Activated CD4-positive, alpha-beta memory T cell treated with anti-CD3 and anti-CD28 coated beads for 36 hours (primary cell): ENCODE measurements at regions of chr15 and their contacts with region 1.

Region 1: DNA sequence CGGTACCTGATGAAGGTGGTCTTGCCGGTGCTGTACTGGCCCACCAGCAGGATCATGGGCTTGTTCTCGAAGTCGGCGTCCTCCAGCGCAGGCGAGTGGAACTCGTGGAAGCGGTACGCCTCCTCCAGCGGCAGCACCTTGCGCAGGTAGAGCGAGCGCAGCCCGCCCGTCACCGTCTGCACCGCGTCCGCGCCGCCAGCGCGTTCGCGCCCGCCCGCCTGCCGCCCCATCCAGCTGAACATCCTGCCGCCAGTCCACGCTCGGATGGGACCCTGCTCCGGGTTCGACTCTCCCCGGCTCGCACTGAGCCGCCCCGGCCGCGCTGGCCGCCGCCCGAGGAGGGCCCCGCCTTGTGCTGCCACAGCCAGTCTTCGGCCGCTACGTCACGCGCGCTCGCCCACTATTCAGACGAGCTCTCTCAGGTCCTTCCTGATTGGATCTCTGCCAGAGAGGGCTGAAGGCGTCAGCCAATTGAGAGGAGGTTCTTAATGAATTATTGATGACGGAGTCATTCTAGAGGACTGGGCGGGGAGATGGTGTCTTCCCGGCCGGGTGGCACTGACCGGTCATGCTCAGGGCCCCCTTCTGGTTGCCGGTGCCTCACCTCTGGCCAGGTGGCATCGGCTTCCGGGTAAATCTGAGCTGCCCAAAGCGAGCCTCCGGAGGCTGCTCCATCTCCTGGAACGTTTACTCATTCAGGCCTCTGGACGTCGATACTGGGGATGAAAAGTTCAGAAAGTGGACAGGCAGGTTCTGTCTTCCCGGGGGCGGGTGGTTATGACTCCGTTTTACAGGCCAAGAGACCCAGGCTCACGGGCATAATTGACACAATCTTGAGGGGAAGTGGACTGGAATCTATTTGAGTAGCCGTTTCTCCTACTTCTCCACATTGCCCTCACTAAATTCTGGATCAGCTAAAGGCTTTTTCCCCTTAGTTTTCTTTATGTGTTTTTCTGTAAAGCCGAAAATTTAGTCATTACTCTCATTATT is at the start of gene EHD4:
- DNase-seq: peak; percentile 98
- H3K4me3 Mint-ChIP-seq: peak within 1 kb of the TSS; percentile 90
- H3K27ac Mint-ChIP-seq: peak within 1 kb of the TSS; percentile 97
- H3K4me1 Mint-ChIP-seq: peaks cover 53% of the 10 kb centered on the region
- H3K27me3 Mint-ChIP-seq: peaks cover 7% of the 10 kb centered on the region
- total RNA-seq, gene EHD4: 43.6 to 45.0 TPM

Region 2: GRCh38 chr15:41493205-41493901 is 479.2 kb before region 1 on chr15 and contains the start of gene ITPKA:
- CTCF ChIA-PET with region 1: no interaction called
- POLR2A ChIA-PET with region 1: no interaction called
- intact Hi-C with region 1: loop called (anchors 2 kb)
- DNase-seq: peak; percentile 95
- H3K4me3 Mint-ChIP-seq: peak within 1 kb of the TSS; percentile 67
- H3K27ac Mint-ChIP-seq: peak within 1 kb of the TSS; percentile 61
- H3K4me1 Mint-ChIP-seq: peaks cover 36% of the 10 kb centered on the region
- H3K27me3 Mint-ChIP-seq: peaks cover 31% of the 10 kb centered on the region
- total RNA-seq, gene ITPKA: 3.5 to 4.7 TPM

Region 3: DNA sequence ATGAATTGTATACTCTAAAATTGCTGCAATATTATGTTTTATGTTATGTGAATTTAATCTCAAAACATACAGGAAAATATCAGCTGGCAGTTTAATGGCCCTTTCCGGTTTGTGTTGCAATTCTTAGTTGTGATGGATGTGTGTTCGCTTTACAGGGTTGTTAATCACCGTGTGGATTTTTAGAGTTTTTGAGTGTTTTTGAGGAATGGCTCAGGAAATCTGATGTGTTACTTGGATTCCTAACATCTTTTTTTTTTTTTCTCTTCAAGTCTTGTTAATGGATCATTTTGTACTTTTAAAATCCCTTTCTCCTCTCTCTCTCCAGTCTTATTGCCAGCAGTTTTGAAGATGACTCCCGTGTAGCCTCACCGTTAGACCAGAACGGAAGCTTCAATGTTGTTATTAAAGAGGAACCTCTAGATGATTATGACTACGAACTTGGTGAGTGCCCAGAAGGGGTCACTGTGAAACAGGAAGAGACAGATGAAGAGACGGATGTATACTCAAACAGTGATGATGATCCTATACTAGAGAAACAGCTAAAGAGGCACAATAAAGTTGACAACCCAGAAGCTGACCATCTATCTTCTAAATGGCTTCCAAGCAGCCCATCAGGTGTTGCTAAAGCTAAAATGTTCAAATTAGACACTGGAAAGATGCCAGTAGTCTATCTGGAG is 276.7 kb before region 1 on chr15:
- CTCF ChIA-PET with region 1: no interaction called
- POLR2A ChIA-PET with region 1: no interaction called
- intact Hi-C with region 1: loop called (anchors 2 kb)
- DNase-seq: peak; percentile 66
- H3K4me3 Mint-ChIP-seq: peak overlapping the region; percentile 10
- H3K27ac Mint-ChIP-seq: peak overlapping the region; percentile 70
- H3K4me1 Mint-ChIP-seq: peaks cover 47% of the 10 kb centered on the region
- H3K27me3 Mint-ChIP-seq: no peaks in the 10 kb centered on the region

Region 4: DNA sequence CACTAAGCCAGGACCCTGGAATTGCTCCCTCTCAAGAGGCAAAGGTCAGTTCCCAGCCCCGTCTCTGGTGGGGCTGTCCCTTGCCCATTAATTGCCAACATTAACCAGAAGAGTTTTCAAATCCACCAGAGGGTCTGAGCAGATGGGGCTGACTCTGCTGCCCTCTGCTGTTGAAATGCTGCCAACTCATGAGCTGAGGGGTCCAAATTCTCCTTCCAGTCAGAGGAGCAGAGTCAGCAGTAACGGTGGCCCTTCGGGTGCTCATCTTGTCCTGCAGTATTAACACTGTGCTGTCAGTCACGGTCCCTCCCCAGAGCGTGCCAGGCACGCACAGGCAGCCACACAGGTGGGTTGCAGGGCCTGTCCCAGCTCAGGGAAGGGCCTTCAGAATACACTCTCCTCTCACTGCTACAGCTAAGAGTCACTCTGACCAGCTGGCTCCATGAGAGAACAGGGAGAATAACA is 68.0 kb before region 1 on chr15:
- CTCF ChIA-PET with region 1: interaction called, 10 read pairs
- POLR2A ChIA-PET with region 1: interaction called, 5 read pairs
- intact Hi-C with region 1: no loop called
- DNase-seq: peak; percentile 81
- H3K4me3 Mint-ChIP-seq: no peak overlapping the region
- H3K27ac Mint-ChIP-seq: peak overlapping the region; percentile 54
- H3K4me1 Mint-ChIP-seq: peaks cover 9% of the 10 kb centered on the region
- H3K27me3 Mint-ChIP-seq: no peaks in the 10 kb centered on the region

Region 5: DNA sequence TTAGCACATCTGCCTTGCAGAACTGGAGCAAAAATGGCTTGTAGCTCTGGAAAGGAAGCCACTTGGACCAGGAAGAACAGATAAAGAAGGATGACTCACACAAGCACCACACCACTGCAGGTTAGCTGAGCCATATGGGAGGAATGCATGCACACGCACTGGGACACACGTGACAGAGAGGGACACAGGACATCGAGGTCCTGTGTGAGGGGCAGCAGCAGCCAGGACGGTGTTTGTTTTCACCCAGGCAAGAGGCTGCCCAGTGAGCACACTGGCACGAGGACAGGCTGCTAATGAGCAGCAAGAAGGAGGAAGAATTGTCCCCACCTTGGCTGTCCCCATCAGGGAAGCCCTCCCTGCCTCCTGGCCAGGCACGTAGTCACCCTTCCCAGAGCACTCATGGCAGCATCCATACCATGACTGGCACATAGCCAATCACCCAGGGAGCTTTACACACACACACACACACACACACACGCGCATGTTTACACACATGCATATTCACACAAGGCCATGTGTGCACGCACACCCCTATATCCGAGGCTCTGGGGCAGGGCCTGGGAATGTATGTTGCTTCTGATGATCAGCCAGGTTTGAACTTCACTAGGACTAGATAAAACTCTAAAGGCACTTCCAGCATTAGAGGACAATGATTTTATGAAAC is 54.6 kb before region 1 on chr15:
- CTCF ChIA-PET with region 1: no interaction called
- POLR2A ChIA-PET with region 1: no interaction called
- intact Hi-C with region 1: no loop called
- DNase-seq: no peak
- H3K4me3 Mint-ChIP-seq: no peak overlapping the region
- H3K27ac Mint-ChIP-seq: no peak overlapping the region
- H3K4me1 Mint-ChIP-seq: peaks cover 5% of the 10 kb centered on the region
- H3K27me3 Mint-ChIP-seq: no peaks in the 10 kb centered on the region

Region 6: DNA sequence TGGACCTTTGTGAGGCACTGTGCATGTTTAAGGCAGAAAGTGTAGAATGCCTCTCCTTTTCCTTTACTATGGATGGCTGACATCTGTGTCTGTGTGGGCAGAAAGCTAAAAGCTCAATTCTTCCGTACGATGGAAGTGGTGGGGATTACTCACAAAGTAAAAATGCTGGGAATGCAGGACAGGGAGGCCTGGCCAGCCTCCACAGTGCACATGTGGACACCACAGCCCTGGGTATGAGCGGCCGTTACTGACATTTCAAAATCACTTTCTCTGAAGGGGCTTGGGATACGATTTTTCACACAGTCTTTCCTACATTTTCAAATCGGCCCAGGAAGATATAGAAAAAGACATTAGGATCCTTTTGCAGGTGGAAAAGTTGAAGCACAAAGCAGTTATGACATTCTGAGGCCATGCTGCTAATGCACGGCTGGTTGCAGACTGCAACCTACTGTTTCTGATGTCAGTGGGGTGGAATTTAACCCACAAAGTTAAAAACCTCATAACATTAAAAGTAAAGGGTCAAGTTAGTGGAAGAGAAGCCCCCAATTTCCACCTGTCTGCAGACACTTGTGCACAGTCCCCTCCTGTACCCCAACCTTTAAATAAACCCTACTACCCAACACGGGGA is 28.1 kb before region 1 on chr15:
- CTCF ChIA-PET with region 1: no interaction called
- POLR2A ChIA-PET with region 1: interaction called, 63 read pairs
- intact Hi-C with region 1: loop called (anchors 1 kb)
- DNase-seq: no peak
- H3K4me3 Mint-ChIP-seq: no peak overlapping the region
- H3K27ac Mint-ChIP-seq: peak overlapping the region; percentile 38
- H3K4me1 Mint-ChIP-seq: peaks cover 32% of the 10 kb centered on the region
- H3K27me3 Mint-ChIP-seq: no peaks in the 10 kb centered on the region

Region 7: DNA sequence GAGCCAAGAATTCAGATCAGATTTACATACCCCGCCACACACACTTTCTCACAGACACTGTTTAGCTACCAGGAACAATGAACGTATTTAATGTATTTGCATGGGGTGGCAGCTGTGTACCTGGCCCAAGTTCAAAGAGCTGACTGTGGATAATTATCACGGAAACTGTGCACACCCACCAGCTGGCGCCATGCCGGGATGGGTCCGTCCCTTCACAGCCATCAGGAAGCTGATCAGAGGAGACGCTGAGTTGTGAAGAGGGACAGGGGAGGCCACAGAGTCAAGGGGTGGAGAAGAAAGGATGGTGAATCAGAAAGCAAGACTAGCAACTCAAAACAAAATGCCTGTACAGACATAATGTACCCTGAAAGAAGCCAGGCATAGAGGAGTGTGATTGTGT is 134.9 kb after region 1 on chr15:
- CTCF ChIA-PET with region 1: no interaction called
- POLR2A ChIA-PET with region 1: interaction called, 10 read pairs
- intact Hi-C with region 1: loop called (anchors 5 kb)
- DNase-seq: peak; percentile 87
- H3K4me3 Mint-ChIP-seq: peak overlapping the region; percentile 10
- H3K27ac Mint-ChIP-seq: peak overlapping the region; percentile 11
- H3K4me1 Mint-ChIP-seq: peaks cover 16% of the 10 kb centered on the region
- H3K27me3 Mint-ChIP-seq: peaks cover 23% of the 10 kb centered on the region